ENCODE measurements at regions of chr7 and their contacts with region 1.

Region 1: DNA sequence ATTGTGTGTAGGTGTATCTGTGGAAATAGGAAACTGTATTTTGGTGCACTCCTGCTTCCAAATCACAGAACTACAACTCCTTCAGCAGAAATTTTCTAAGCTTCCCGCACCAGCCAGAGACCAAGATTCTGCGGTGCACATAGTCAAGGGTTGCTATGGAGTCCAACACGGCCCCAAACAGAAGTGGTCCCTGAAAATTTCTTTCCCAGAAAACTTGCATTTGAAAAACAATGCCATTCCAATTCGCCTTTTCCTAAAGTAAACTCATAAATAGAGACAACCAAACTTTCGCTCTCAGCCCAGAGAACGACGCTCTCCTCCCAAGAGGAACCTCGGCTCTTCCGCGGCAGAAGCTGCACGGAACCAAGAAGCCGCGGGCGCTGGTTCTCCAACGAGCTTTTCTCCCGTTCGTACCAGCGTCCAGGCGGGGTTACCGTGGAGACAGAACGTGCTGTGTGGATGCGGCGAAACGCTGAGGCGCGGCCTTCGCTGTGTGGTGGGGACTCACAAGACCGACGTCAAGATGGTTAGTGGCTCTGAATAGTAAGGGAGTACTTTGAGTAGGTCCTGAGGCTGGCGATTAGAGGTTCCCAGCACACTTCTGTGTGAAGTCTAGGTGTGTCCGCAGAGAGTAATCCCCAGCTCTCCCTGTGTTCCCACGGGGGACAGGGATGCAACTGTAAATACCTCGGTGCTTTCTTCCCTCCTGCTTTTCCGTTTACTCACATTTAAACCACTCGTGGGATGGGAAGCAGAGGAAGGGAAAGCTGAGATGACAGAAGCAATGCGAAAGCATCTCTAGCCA is 24.0 kb upstream of the ZC3HAV1 start:
- DNase-seq: peak; percentile 87
- ATAC-seq: peak; percentile 96 to 99 (median 99)
- H3K4me3 ChIP-seq: peak overlapping the region; percentile 25 to 79 (median 62)
- H3K27ac ChIP-seq: peak overlapping the region in 9 of 10 donors; percentile 46 to 84 (median 66)
- H3K4me1 ChIP-seq: peaks cover 0 to 33% (median 12%) of the 10 kb centered on the region in 9 donors
- H3K27me3 ChIP-seq: no peaks in the 10 kb centered on the region
- CTCF ChIP-seq: no peak

Region 2: GRCh38 chr7:139016931-139017511 is 116.5 kb before region 1 on chr7:
- intact Hi-C with region 1: loop called in 1 of 10 experiments (anchors 5 kb)
- DNase-seq: peak; percentile 35 to 68
- ATAC-seq: peak in 7 of 8 donors; percentile 71 to 86 (median 81)
- H3K4me3 ChIP-seq: no peak overlapping the region
- H3K27ac ChIP-seq: no peak overlapping the region
- H3K4me1 ChIP-seq: peaks cover 0 to 4% (median 0%) of the 10 kb centered on the region in 9 donors
- H3K27me3 ChIP-seq: peaks cover 0 to 6% (median 0%) of the 10 kb centered on the region in 7 donors
- CTCF ChIP-seq: peak; percentile 33 to 80 (median 69)

Region 3: GRCh38 chr7:139068544-139069399 is 64.8 kb before region 1 on chr7:
- intact Hi-C with region 1: no loop called
- DNase-seq: no peak
- ATAC-seq: no peak
- H3K4me3 ChIP-seq: no peak overlapping the region
- H3K27ac ChIP-seq: no peak overlapping the region
- H3K4me1 ChIP-seq: peaks cover 0 to 14% (median 0%) of the 10 kb centered on the region in 9 donors
- H3K27me3 ChIP-seq: no peaks in the 10 kb centered on the region
- CTCF ChIP-seq: no peak

Region 4: GRCh38 chr7:139109188-139109982 is 24.2 kb before region 1 on chr7 and contains the start of gene ZC3HAV1:
- intact Hi-C with region 1: loop called in 1 of 10 experiments (anchors 2 kb)
- DNase-seq: peak; percentile 83 to 91
- ATAC-seq: peak; percentile 93 to 96 (median 95)
- H3K4me3 ChIP-seq: peak within 1 kb of the TSS; percentile 84 to 99 (median 92)
- H3K27ac ChIP-seq: peak within 1 kb of the TSS; percentile 92 to 100 (median 97)
- H3K4me1 ChIP-seq: peaks cover 0 to 54% (median 26%) of the 10 kb centered on the region in 9 donors
- H3K27me3 ChIP-seq: no peaks in the 10 kb centered on the region
- CTCF ChIP-seq: peak in 1 of 9 donors; percentile 23
- total RNA-seq, gene ZC3HAV1: 4.4 to 28.3 (median 6.7) TPM

Region 5: DNA sequence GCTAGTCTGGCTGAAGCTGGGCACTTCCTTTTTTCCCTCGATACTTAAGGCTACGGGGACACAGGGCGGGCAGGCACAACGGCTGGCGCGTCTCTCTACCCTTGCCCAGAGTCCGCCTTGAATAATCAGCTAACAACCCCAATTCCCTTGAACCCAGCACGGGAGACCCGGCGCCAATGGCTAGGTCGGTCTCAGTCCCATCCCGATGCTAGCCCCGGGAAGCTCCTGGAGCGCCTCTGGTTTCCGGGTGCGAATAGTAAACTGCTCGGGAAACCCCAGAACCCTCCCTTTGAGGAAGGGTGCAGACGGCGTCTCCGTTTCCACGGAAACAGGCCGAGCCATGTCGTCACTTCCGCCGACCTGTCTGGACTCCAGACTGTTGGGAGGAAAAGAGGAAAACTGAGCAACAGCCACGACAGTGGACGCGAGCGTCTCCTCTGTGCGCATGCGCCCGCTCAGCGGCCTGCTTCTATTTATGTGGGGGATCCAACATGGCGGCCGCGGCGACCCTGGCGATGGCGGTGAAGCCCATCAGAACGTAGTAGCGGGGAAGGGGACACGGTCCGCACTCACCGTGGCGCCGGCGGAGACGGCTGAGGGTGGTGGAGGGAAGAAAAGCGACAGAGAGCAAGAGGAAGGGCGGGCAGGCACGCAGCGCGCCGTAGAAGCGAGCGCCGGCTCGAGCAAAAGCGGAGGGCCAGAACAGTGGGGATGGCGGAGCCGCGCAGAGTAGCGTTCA is 97.4 kb after region 1 on chr7 and contains the start of gene UBN2:
- intact Hi-C with region 1: loop called in 3 of 10 experiments (anchors 5 kb)
- DNase-seq: peak; percentile 96 to 97
- ATAC-seq: peak; percentile 97 to 99 (median 98)
- H3K4me3 ChIP-seq: peak within 1 kb of the TSS; percentile 78 to 100 (median 94)
- H3K27ac ChIP-seq: peak within 1 kb of the TSS; percentile 88 to 99 (median 96)
- H3K4me1 ChIP-seq: peaks cover 0 to 38% (median 34%) of the 10 kb centered on the region in 9 donors
- H3K27me3 ChIP-seq: no peaks in the 10 kb centered on the region
- CTCF ChIP-seq: no peak
- total RNA-seq, gene UBN2: 12.6 to 27.0 (median 22.3) TPM

Measured in heart right ventricle (tissue), 16 donors.